CD4-positive, alpha-beta memory T cell (primary cell): ENCODE measurements at regions of chr10 and their contacts with region 1.

Region 1: DNA sequence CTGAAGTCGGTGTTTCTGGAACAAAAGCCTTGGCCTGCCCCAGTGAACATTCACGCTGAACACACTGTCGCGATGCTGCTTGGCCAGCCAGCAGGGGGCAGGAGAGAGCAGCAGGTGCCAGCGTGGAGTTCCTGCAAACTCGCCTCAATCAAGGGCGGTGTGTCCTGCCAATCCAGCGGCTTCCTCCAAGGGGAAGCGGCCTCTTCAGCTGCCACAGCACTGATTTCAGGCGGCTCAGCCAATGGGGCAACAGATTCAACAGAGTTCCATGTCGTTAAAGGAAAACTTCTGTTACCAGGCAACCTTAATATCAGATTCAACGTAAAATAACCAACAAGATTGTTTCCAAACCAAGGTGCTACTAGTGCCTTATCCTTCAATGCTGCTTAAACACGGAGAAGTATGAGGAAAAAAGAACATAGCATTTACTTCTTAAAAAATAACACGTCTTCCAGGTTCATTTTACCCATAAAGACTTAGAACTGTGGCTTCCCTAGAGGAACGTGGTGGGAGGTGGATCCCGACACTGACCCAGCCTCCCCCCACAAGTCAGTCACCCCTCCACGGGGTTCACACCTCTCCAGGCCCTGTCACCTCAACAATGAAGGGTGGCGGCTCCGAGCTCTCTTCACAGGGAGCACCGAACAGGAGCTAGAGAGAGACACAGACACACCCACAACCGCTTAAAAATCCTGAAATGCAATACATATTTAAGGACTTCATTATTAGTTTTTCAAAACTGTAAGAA is 178.2 kb downstream of the DIP2C start:
- DNase-seq: peak; percentile 67 to 75 (median 70)
- H3K4me3 ChIP-seq: no peak overlapping the region
- H3K4me3 Mint-ChIP-seq: peak overlapping the region in 3 of 8 donors; percentile 4 to 29 (median 22)
- H3K27ac ChIP-seq: no peak overlapping the region
- H3K27ac Mint-ChIP-seq: peak overlapping the region in 2 of 7 donors; percentile 7 to 42
- H3K4me1 ChIP-seq: peaks cover 4% of the 10 kb centered on the region
- H3K4me1 Mint-ChIP-seq: peaks cover 13 to 22% (median 17%) of the 10 kb centered on the region in 4 donors
- H3K27me3 ChIP-seq: no peaks in the 10 kb centered on the region
- H3K27me3 Mint-ChIP-seq: peaks cover 0 to 1% of the 10 kb centered on the region in 2 donors

Region 2: GRCh38 chr10:178208-178607 is 333.1 kb before region 1 on chr10:
- CTCF ChIA-PET with region 1: interaction called, 4 read pairs
- POLR2A ChIA-PET with region 1: interaction called, 3 read pairs
- intact Hi-C with region 1: loop called (anchors 1 kb)
- DNase-seq: peak in 3 of 5 donors; percentile 13 to 16 (median 13)
- H3K4me3 ChIP-seq: no peak overlapping the region
- H3K4me3 Mint-ChIP-seq: no peak overlapping the region
- H3K27ac ChIP-seq: no peak overlapping the region
- H3K27ac Mint-ChIP-seq: no peak overlapping the region
- H3K4me1 ChIP-seq: peaks cover 14% of the 10 kb centered on the region
- H3K4me1 Mint-ChIP-seq: peaks cover 13 to 24% (median 22%) of the 10 kb centered on the region in 4 donors
- H3K27me3 ChIP-seq: no peaks in the 10 kb centered on the region
- H3K27me3 Mint-ChIP-seq: no peaks in the 10 kb centered on the region

Region 3: GRCh38 chr10:361203-362081 is 149.8 kb before region 1 on chr10:
- CTCF ChIA-PET with region 1: no interaction called
- POLR2A ChIA-PET with region 1: no interaction called
- intact Hi-C with region 1: no loop called
- DNase-seq: no peak
- H3K4me3 ChIP-seq: no peak overlapping the region
- H3K4me3 Mint-ChIP-seq: no peak overlapping the region
- H3K27ac ChIP-seq: no peak overlapping the region
- H3K27ac Mint-ChIP-seq: peak overlapping the region in 4 of 7 donors; percentile 24 to 42 (median 30)
- H3K4me1 ChIP-seq: no peaks in the 10 kb centered on the region
- H3K4me1 Mint-ChIP-seq: no peaks in the 10 kb centered on the region
- H3K27me3 ChIP-seq: no peaks in the 10 kb centered on the region
- H3K27me3 Mint-ChIP-seq: no peaks in the 10 kb centered on the region

Region 4: DNA sequence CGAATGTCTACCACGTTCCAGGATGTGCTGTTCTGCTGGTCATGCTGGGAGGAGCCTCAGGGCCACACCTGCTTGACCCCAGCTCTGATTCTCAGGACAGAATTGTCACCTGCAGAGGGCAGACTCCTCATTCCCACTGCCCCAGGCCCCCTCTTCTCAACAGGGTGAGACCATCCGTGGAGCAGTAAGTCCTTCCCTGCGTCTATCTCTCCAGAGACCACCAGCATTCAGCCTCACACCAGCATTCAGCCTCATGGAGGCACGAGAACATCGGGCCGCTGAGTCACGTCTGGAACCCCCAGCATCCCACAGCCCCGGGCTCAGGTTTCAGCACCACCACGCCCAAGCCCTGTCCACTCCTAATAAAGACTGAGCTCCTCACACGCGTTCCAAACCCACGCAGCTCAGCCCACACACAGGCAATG is 95.2 kb before region 1 on chr10:
- CTCF ChIA-PET with region 1: no interaction called
- POLR2A ChIA-PET with region 1: no interaction called
- intact Hi-C with region 1: no loop called
- DNase-seq: no peak
- H3K4me3 ChIP-seq: no peak overlapping the region
- H3K4me3 Mint-ChIP-seq: no peak overlapping the region
- H3K27ac ChIP-seq: no peak overlapping the region
- H3K27ac Mint-ChIP-seq: peak overlapping the region in 1 of 7 donors; percentile 52
- H3K4me1 ChIP-seq: no peaks in the 10 kb centered on the region
- H3K4me1 Mint-ChIP-seq: no peaks in the 10 kb centered on the region
- H3K27me3 ChIP-seq: no peaks in the 10 kb centered on the region
- H3K27me3 Mint-ChIP-seq: no peaks in the 10 kb centered on the region

Region 5: DNA sequence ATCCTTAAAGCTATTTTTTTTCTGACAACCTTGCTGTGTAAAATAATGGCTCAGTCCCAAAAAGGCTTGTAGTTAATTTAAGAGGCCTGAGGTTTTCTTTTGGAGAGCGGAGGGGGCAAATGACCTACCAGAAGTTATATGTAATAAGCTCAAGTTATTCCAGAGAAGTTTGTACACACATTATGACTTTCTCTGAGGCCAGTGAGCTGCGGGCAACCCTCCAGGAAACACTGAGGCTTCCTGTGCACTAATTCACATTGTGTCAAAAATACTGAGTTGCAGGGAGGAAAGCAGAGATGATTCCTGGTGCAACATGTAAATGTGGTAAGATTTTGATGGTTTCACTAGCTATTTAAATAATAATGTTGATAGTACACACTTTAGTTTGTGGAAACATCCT is 10.4 kb before region 1 on chr10:
- CTCF ChIA-PET with region 1: interaction called, 11 read pairs
- POLR2A ChIA-PET with region 1: no interaction called
- intact Hi-C with region 1: no loop called
- DNase-seq: no peak
- H3K4me3 ChIP-seq: no peak overlapping the region
- H3K4me3 Mint-ChIP-seq: peak overlapping the region in 4 of 8 donors; percentile 7 to 53 (median 34)
- H3K27ac ChIP-seq: no peak overlapping the region
- H3K27ac Mint-ChIP-seq: peak overlapping the region in 4 of 7 donors; percentile 9 to 61 (median 30)
- H3K4me1 ChIP-seq: peaks cover 21% of the 10 kb centered on the region
- H3K4me1 Mint-ChIP-seq: peaks cover 22 to 36% (median 27%) of the 10 kb centered on the region in 4 donors
- H3K27me3 ChIP-seq: no peaks in the 10 kb centered on the region
- H3K27me3 Mint-ChIP-seq: peaks cover 4% of the 10 kb centered on the region in 2 donors

Region 6: GRCh38 chr10:810351-810846 is 299.1 kb after region 1 on chr10:
- CTCF ChIA-PET with region 1: no interaction called
- POLR2A ChIA-PET with region 1: no interaction called
- intact Hi-C with region 1: loop called (anchors 10 kb)
- DNase-seq: no peak
- H3K4me3 ChIP-seq: no peak overlapping the region
- H3K4me3 Mint-ChIP-seq: no peak overlapping the region
- H3K27ac ChIP-seq: no peak overlapping the region
- H3K27ac Mint-ChIP-seq: no peak overlapping the region
- H3K4me1 ChIP-seq: no peaks in the 10 kb centered on the region
- H3K4me1 Mint-ChIP-seq: peaks cover 0 to 6% (median 0%) of the 10 kb centered on the region in 4 donors
- H3K27me3 ChIP-seq: no peaks in the 10 kb centered on the region
- H3K27me3 Mint-ChIP-seq: no peaks in the 10 kb centered on the region